ENCODE measurements at regions of chr16 and their contacts with region 1.

Region 1: DNA sequence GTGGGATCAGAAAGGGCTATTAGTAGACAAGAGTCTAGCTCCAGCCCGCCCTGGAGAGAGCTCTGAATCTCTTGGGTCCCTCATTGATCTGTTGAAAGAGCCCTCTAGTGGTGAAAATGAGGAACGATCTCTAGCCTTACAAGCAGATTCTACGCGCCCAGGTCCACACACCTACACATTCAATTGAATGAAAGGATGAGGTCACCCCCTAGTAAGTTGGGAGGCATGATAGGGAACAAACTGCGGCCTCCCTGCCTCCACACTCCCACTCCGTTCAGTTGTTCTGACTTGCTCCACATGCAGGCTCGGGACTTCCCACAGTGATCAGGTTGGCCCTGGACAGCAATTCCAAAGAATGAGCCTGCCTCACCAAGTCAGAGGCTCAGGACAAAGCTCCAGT is 2.9 kb upstream of the CACNG3 start:
- DNase-seq: peak; percentile 43
- H3K4me3 Mint-ChIP-seq: no peak overlapping the region
- H3K27ac Mint-ChIP-seq: no peak overlapping the region
- H3K4me1 Mint-ChIP-seq: peaks cover 3% of the 10 kb centered on the region
- H3K27me3 Mint-ChIP-seq: peaks cover 44% of the 10 kb centered on the region

Region 2: DNA sequence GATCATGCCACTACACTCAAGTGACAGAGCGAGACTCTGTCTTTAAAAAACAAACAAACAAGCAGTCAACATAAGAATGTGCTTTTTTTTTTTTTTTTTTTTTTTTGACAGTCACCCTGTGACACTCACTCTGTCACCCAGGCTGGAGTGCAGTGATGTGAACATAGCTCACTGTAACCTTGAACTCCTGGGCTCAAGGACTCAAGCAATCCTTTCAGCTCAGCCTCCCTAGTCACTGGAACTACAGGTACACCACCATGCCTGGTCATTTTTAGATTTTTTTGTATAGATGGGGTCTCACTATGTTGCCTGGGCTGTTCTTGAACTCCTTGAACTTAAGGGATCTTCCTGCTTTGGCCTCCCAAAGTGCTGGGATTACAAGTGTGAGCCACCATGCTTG is 513.7 kb before region 1 on chr16:
- CTCF ChIA-PET with region 1: no interaction called
- intact Hi-C with region 1: loop called (anchors 5 kb)
- DNase-seq: no peak
- H3K4me3 Mint-ChIP-seq: no peak overlapping the region
- H3K27ac Mint-ChIP-seq: no peak overlapping the region
- H3K4me1 Mint-ChIP-seq: peaks cover 3% of the 10 kb centered on the region
- H3K27me3 Mint-ChIP-seq: peaks cover 6% of the 10 kb centered on the region

Region 3: GRCh38 chr16:24036614-24037013 is 216.6 kb before region 1 on chr16:
- CTCF ChIA-PET with region 1: interaction called, 43 read pairs
- intact Hi-C with region 1: no loop called
- DNase-seq: peak; percentile 56
- H3K4me3 Mint-ChIP-seq: no peak overlapping the region
- H3K27ac Mint-ChIP-seq: no peak overlapping the region
- H3K4me1 Mint-ChIP-seq: peaks cover 22% of the 10 kb centered on the region
- H3K27me3 Mint-ChIP-seq: no peaks in the 10 kb centered on the region

Region 4: DNA sequence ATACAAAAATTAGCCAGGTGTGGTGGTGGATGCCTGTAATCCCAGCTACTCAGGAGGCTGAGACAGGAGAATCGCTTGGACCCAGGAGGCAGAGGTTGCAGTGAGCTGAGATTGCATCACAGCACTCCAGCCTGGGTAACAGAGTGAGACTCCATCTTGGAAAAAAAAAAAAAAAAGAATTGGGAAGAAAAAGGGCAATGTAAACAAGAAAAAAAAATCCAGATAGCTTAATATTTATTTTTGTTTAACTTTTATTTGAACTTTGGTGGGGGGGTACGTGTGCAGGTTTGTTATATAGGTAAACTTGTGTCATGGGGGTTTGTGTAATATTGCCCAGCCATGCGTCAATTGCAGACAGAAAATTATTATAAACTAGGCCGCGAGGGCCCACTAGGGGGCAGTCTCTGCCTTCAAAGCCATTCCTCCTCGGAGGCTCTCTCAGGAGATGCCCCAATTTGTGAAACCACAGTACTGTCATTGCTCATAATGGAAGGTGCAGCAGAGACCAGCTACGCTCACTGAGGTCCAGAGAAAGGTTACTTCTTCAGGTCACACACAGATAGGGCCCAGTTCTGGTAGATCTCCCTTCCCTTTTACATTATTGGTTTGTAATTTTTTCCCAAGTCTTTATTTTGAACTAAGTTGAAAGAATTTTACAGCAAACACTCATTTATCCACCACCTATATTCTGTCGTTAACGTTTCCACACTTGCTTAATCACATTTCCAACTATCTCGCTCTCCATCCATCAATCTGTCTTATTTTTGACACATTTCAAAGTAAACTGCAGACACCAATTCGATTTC is 211.2 kb before region 1 on chr16:
- CTCF ChIA-PET with region 1: interaction called, 43 read pairs
- intact Hi-C with region 1: loop called (anchors 1 kb)
- DNase-seq: peak; percentile 88
- H3K4me3 Mint-ChIP-seq: no peak overlapping the region
- H3K27ac Mint-ChIP-seq: no peak overlapping the region
- H3K4me1 Mint-ChIP-seq: peaks cover 4% of the 10 kb centered on the region
- H3K27me3 Mint-ChIP-seq: no peaks in the 10 kb centered on the region

Region 5: GRCh38 chr16:24070851-24071250 is 182.3 kb before region 1 on chr16:
- CTCF ChIA-PET with region 1: interaction called, 39 read pairs
- intact Hi-C with region 1: loop called (anchors 1 kb)
- DNase-seq: peak; percentile 61
- H3K4me3 Mint-ChIP-seq: no peak overlapping the region
- H3K27ac Mint-ChIP-seq: no peak overlapping the region
- H3K4me1 Mint-ChIP-seq: peaks cover 8% of the 10 kb centered on the region
- H3K27me3 Mint-ChIP-seq: no peaks in the 10 kb centered on the region

Region 6: DNA sequence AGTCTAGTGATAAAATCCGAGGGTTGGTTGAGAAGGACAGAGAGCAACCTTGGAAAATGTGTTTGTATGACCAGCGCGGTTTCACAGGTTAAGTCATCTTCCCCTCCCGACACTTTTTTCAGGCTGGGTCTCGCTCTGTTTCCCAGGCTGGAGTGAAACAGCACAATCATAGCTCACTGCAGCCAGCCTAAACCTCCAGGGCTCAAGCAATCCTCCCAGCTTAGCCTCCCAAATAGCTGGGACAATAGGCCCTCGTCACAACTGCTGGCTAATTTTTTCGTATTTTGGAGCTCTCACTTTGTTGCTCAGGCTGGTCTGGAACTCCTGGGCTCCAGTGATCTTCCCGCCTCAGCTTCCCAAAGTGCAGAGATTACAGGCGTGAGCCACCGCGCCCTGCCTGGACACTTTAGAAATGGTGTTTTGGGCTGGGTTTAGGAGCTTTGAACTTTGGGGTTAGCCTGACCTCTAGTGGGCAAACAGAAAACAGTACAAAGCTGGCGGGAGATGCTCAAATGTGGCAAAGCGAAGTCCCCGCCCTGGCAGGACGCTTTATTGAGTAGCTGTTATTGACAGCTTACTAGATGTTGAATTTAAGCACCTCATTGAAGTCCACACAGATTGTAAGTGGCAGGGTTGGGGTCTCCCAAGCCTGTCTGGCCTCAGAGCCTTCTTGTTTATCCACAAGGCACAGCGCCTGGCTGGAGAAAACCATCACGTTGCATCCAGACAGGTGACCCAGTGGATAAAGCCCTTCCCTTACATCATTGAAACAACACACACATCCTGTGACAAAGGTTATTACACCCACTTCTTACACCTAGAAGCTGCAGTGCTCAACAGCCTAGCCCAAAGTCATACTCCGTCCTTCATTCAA is 251.5 kb after region 1 on chr16:
- CTCF ChIA-PET with region 1: interaction called, 14 read pairs
- intact Hi-C with region 1: loop called (anchors 1 kb)
- DNase-seq: peak; percentile 70
- H3K4me3 Mint-ChIP-seq: no peak overlapping the region
- H3K27ac Mint-ChIP-seq: no peak overlapping the region
- H3K4me1 Mint-ChIP-seq: no peaks in the 10 kb centered on the region
- H3K27me3 Mint-ChIP-seq: no peaks in the 10 kb centered on the region